Dendritic cell treated with granulocyte-macrophage colony-stimulating factor and Interleukin-4, amounts not matched to agents 40 ng/mL and 50 ng/mL, for 4 days (primary cell): ENCODE measurements at regions of chr11 and their contacts with region 1.

Region 1: GRCh38 chr11:112086422-112087191 is at the starts of genes SDHD and TIMM8B:
- H3K4me3 Mint-ChIP-seq: peak within 1 kb of the TSS; percentile 96
- H3K27ac Mint-ChIP-seq: peak within 1 kb of the TSS; percentile 99
- H3K4me1 Mint-ChIP-seq: peaks cover 62% of the 10 kb centered on the region
- H3K27me3 Mint-ChIP-seq: no peaks in the 10 kb centered on the region

Region 2: DNA sequence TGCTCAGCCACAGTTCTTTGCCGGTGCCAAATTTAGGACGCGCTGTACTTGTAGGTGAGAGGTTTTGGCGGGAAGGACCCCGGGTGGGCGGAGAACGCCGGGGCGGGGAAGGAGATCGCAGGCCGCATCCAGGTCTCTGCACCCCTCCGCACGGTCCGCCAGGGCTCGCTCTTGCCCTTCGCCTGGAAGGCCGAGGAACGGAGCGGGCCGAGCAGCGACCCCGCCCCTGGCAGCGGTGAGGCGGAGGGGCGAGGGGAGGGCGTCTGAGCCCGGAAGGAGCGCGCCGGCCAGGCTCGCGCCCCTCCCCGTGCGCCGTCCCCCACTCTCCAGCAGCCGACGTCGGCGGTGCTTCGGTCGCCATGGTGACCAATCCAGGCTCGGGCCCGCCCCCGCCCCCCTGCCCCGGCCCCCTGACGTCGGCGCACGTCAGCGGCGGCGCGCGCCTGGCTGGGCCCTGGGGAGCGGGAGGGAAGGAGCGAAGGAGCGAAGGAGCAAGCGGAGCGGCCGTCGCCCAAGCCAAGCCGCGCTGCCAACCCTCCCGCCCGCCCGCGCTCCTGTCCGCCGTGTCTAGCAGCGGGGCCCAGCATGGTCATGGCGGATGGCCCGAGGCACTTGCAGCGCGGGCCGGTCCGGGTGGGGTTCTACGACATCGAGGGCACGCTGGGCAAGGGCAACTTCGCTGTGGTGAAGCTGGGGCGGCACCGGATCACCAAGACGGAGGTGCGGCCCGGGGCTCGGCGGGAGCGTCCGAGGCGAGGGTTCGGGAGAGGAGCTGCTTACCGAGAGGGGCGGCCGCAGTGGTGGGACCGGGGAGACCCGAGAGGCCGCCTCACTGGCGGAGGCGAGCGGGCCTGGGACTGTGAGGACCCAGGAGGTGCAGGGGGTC is 484.4 kb before region 1 on chr11 and contains the start of gene SIK2:
- intact Hi-C with region 1: loop called (anchors 5 kb)
- H3K4me3 Mint-ChIP-seq: peak within 1 kb of the TSS; percentile 89
- H3K27ac Mint-ChIP-seq: peak within 1 kb of the TSS; percentile 89
- H3K4me1 Mint-ChIP-seq: peaks cover 36% of the 10 kb centered on the region
- H3K27me3 Mint-ChIP-seq: no peaks in the 10 kb centered on the region

Region 3: DNA sequence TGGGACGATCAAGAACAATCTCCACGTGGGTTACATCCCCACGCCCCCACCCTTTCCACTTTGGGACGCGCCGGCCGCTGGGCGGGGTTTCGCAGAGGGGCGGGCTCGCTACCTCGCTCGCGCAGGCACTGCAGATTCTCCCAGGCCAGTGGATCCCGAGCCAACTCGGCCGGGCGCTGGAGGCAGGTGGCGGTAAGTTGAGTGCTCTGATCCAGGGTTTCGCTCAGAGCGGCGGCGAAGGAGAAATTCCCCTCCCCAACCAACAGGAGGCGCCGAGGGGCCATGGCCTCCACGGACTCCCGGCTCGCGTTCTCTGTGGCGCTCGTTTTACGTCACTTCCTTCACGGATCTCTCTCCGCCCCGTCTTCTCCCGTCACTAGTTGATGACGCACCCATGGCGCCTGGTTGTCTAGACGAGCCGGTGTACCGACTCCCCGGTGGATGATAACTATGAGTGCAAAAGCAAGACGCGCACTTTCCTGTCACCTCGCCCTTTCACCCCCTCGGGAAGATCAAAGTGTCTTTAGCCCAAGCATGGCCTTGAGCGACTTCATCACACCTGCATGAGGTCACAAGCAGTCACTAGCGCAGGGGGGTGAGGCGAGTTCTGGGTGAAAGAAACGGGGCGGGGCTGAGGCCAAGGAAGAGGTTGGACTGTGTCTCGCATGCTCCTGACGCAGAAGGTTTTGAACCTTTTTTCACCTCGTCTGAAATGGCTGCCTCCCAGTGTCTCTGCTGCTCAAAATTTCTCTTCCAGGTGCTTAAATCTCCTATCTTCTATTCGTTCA is 207.6 kb before region 1 on chr11 and contains the starts of genes CFAP68 and FDXACB1:
- intact Hi-C with region 1: loop called (anchors 5 kb)
- H3K4me3 Mint-ChIP-seq: peak within 1 kb of the TSS; percentile 94
- H3K27ac Mint-ChIP-seq: peak within 1 kb of the TSS; percentile 97
- H3K4me1 Mint-ChIP-seq: peaks cover 29% of the 10 kb centered on the region
- H3K27me3 Mint-ChIP-seq: no peaks in the 10 kb centered on the region

Region 4: DNA sequence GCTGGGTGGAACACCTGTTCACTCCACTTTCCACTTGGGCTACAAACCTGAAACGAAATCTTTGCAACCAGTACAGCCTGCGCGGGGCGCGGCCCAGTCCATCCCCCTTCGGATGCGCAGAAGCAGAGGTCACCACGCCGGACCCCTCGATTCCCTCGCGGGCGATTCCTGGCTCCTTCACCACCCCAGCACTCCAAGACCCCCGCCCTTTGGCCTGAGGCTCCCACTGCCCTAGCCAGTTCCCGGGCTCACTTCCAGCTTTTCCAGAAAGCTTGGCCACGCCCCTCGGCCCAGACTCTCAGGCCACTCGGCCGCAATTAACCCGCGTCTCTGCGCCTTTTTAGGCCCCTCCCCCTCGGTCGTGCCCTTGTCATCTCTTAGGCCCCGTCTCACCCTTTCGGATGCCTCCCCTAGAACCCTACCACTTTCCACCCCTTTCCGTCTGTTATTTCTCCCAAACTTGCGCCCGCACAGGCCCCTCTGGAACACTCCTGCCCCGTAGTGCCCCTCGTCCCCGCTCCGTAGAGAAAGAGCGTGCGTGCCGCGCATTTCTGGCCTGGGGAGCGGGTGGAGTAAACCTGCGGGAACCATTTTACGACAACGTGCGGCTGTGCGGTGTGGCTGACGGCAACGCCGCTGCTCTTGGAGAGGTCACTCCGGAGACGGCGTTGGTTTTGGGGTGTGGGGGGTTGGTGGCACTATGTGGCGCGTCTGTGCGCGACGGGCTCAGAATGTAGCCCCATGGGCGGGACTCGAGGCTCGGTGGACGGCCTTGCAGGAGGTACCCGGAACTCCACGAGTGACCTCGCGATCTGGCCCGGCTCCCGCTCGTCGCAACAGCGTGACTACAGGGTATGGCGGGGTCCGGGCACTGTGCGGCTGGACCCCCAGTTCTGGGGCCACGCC is 61.6 kb before region 1 on chr11 and contains the start of gene DLAT:
- intact Hi-C with region 1: loop called (anchors 2 kb)
- H3K4me3 Mint-ChIP-seq: peak within 1 kb of the TSS; percentile 98
- H3K27ac Mint-ChIP-seq: peak within 1 kb of the TSS; percentile 96
- H3K4me1 Mint-ChIP-seq: peaks cover 11% of the 10 kb centered on the region
- H3K27me3 Mint-ChIP-seq: no peaks in the 10 kb centered on the region

Region 5: GRCh38 chr11:112074026-112074811 is 12.4 kb before region 1 on chr11 and contains the start of gene NKAPD1:
- intact Hi-C with region 1: loop called (anchors 1 kb)
- H3K4me3 Mint-ChIP-seq: peak within 1 kb of the TSS; percentile 96
- H3K27ac Mint-ChIP-seq: peak within 1 kb of the TSS; percentile 100
- H3K4me1 Mint-ChIP-seq: peaks cover 34% of the 10 kb centered on the region
- H3K27me3 Mint-ChIP-seq: no peaks in the 10 kb centered on the region

Region 6: GRCh38 chr11:112226062-112226830 is 139.6 kb after region 1 on chr11 and contains the start of gene PTS:
- intact Hi-C with region 1: loop called (anchors 1 kb)
- H3K4me3 Mint-ChIP-seq: peak within 1 kb of the TSS; percentile 86
- H3K27ac Mint-ChIP-seq: peak within 1 kb of the TSS; percentile 98
- H3K4me1 Mint-ChIP-seq: peaks cover 24% of the 10 kb centered on the region
- H3K27me3 Mint-ChIP-seq: no peaks in the 10 kb centered on the region

Region 7: DNA sequence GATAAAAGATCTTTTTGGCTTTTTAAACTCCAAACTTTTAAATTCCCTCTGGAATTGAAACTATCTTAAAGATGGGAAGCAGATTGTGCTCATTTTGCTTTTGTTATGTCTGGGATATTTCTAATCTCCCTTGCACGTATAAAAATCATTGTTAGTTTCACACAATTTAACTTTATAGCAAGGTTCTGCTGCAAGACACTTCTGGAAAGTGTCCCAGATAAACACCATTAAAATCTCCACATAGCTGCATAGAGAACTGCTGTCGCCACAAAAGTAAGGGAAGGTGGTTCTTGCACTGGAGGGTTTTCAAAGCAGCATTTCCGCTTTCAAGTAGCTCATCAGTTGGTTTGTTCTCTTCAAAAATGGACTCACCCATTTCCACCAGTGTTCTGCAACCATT is 151.4 kb after region 1 on chr11:
- intact Hi-C with region 1: no loop called
- H3K4me3 Mint-ChIP-seq: no peak overlapping the region
- H3K27ac Mint-ChIP-seq: no peak overlapping the region
- H3K4me1 Mint-ChIP-seq: no peaks in the 10 kb centered on the region
- H3K27me3 Mint-ChIP-seq: no peaks in the 10 kb centered on the region